ENCODE measurements at regions of chr12 and their contacts with region 1.

Region 1: GRCh38 chr12:130281153-130281799 is 56.4 kb upstream of the PIWIL1 start:
- H3K4me3 Mint-ChIP-seq: peak overlapping the region; percentile 50
- H3K27ac Mint-ChIP-seq: no peak overlapping the region
- H3K4me1 Mint-ChIP-seq: no peaks in the 10 kb centered on the region
- H3K27me3 Mint-ChIP-seq: no peaks in the 10 kb centered on the region

Region 2: GRCh38 chr12:130335517-130336392 is 54.5 kb after region 1 on chr12:
- intact Hi-C with region 1: loop called (anchors 2 kb)
- H3K4me3 Mint-ChIP-seq: no peak overlapping the region
- H3K27ac Mint-ChIP-seq: no peak overlapping the region
- H3K4me1 Mint-ChIP-seq: no peaks in the 10 kb centered on the region
- H3K27me3 Mint-ChIP-seq: peaks cover 12% of the 10 kb centered on the region

Region 3: DNA sequence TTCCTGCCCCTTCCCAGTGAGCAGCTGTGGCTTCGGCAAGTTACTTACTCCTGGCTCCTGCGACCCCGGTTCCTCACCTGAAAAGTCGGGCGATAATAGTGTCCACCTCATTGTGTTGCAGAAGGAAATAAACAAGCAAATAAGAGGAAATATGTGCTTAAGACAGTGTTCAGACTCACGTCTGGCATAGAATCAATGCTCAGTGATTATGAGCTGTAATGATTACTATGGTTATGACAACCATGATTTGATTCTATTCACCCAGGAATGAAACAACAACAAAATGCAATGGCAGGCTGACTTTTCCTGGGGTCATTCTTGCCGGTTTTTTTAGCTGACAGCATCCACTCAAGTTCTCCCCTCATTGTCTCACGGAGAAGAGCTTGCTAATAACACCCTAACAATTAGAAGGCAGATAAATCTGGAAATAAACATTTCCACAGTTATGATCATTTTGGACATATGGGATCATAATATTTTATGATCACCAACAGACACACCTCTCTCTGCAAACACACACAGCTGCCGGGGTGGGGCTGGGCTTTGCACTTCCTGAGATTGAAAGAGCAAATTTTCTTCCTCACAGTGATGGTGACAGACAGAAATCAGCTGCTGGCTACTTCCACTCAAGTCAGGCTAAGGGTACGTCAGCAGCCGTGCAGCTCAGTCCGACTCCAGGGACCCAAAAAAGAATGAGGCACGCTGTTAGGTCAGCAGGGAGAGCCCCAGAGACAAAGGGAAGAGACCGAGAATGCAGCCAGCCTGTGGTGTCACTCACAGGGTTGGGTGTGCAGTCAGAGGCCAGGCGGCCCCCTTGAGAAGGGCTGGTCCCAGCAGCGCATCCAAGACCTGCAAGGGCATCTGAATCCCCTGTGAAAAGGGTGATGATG is 276.8 kb after region 1 on chr12:
- intact Hi-C with region 1: no loop called
- H3K4me3 Mint-ChIP-seq: no peak overlapping the region
- H3K27ac Mint-ChIP-seq: no peak overlapping the region
- H3K4me1 Mint-ChIP-seq: no peaks in the 10 kb centered on the region
- H3K27me3 Mint-ChIP-seq: no peaks in the 10 kb centered on the region